Ovary (tissue), 10 donors: ENCODE measurements at regions of chr5 and their contacts with region 1.

Region 1: DNA sequence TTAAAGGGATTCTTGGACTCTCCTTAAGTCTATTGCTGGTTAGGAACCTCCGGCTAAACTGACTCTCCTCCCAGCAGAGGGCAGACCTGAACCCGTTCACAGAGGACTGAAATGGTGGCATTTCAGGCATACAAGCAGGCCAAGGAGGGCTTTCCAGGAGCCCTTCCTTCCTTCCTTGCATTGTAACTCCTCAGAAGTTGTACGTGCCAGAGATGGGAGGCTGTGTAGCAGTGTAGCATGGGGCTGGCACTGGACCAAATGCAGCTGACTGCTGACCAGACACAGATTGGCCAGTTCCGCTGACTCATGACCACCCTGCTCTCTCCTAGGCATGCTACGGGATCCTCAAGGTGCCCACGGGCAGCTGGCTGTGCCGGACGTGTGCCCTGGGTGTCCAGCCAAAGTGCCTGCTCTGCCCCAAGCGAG is 36.4 kb downstream of the JADE2 start:
- DNase-seq: peak in 3 of 5 donors; percentile 56 to 64 (median 57)
- H3K4me3 ChIP-seq: no peak overlapping the region
- H3K27ac ChIP-seq: no peak overlapping the region
- H3K4me1 ChIP-seq: no peaks in the 10 kb centered on the region
- H3K27me3 ChIP-seq: no peaks in the 10 kb centered on the region
- CTCF ChIP-seq: no peak
- EP300 ChIP-seq: no peak
- POLR2A ChIP-seq: no peak

Region 2: GRCh38 chr5:134547999-134548658 is 13.8 kb before region 1 on chr5:
- intact Hi-C with region 1: loop called in 1 of 4 experiments (anchors 1 kb)
- DNase-seq: no peak
- H3K4me3 ChIP-seq: no peak overlapping the region
- H3K27ac ChIP-seq: no peak overlapping the region
- H3K4me1 ChIP-seq: peaks cover 28% of the 10 kb centered on the region
- H3K27me3 ChIP-seq: no peaks in the 10 kb centered on the region
- CTCF ChIP-seq: no peak
- EP300 ChIP-seq: no peak
- POLR2A ChIP-seq: no peak